Activated B cell treated with CpG ODN at 0.5 μM for 24 hours (primary cell): ENCODE measurements at regions of chr19 and their contacts with region 1.

Region 1: GRCh38 chr19:39846176-39846677 is at the start of gene FBL:
- DNase-seq: peak; percentile 98
- ATAC-seq: peak; percentile 94
- H3K4me3 Mint-ChIP-seq: peak within 1 kb of the TSS; percentile 93
- H3K27ac Mint-ChIP-seq: peak within 1 kb of the TSS; percentile 93
- H3K4me1 Mint-ChIP-seq: peaks cover 45% of the 10 kb centered on the region
- H3K27me3 Mint-ChIP-seq: no peaks in the 10 kb centered on the region
- CTCF ChIP-seq: no peak
- total RNA-seq, gene FBL: 420 and 482 TPM in 2 replicates

Region 2: DNA sequence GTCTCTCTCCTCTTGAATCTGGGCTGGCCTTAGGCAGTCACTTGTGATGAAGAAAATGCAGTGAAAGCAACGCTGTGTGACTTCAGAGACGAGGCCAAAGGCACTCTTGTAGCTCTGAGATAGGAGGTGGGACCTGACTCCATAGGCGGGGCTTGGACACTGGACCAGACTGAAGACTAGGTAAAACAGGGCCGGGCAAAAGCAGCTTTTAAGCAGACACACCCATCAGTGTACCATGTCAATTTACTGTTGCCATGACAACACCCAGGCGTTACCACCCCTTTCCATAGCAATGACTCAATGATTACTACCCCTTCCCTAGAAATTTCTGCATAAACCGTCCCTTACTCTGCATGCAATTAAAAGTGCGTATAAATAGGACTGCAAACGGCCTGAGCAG is 299.6 kb before region 1 on chr19:
- CTCF ChIA-PET with region 1: interaction called, 3 read pairs
- POLR2A ChIA-PET with region 1: interaction called, 3 read pairs
- intact Hi-C with region 1: loop called (anchors 1 kb)
- DNase-seq: no peak
- ATAC-seq: no peak
- H3K4me3 Mint-ChIP-seq: no peak overlapping the region
- H3K27ac Mint-ChIP-seq: no peak overlapping the region
- H3K4me1 Mint-ChIP-seq: peaks cover 10% of the 10 kb centered on the region
- H3K27me3 Mint-ChIP-seq: peaks cover 5% of the 10 kb centered on the region
- CTCF ChIP-seq: no peak

Region 3: DNA sequence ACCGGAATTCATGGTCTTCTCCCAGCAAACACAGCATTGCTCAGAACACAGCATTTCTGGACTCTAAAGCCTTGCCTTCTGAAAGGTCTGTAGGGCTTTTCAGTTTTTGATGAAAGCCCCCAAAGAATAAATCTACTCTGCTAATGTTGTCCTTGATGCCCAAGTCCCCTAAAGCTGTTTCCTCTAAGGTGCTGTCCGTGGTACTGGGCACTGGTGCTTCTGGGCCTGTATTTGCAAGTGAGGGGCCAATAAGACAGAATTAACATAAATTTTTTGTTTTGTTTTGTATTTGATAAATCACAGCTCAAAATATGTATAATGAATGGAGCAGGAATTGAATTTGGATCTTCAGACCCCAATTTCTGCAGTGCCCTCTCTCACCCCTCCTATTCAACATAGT is 256.0 kb before region 1 on chr19:
- CTCF ChIA-PET with region 1: no interaction called
- POLR2A ChIA-PET with region 1: no interaction called
- intact Hi-C with region 1: no loop called
- DNase-seq: no peak
- ATAC-seq: no peak
- H3K4me3 Mint-ChIP-seq: no peak overlapping the region
- H3K27ac Mint-ChIP-seq: no peak overlapping the region
- H3K4me1 Mint-ChIP-seq: no peaks in the 10 kb centered on the region
- H3K27me3 Mint-ChIP-seq: peaks cover 29% of the 10 kb centered on the region
- CTCF ChIP-seq: no peak

Region 4: GRCh38 chr19:39671738-39672363 is 174.4 kb before region 1 on chr19:
- CTCF ChIA-PET with region 1: interaction called, 3 read pairs
- POLR2A ChIA-PET with region 1: no interaction called
- intact Hi-C with region 1: loop called (anchors 5 kb)
- DNase-seq: no peak
- ATAC-seq: peak; percentile 68
- H3K4me3 Mint-ChIP-seq: no peak overlapping the region
- H3K27ac Mint-ChIP-seq: no peak overlapping the region
- H3K4me1 Mint-ChIP-seq: peaks cover 4% of the 10 kb centered on the region
- H3K27me3 Mint-ChIP-seq: peaks cover 25% of the 10 kb centered on the region
- CTCF ChIP-seq: no peak

Region 5: DNA sequence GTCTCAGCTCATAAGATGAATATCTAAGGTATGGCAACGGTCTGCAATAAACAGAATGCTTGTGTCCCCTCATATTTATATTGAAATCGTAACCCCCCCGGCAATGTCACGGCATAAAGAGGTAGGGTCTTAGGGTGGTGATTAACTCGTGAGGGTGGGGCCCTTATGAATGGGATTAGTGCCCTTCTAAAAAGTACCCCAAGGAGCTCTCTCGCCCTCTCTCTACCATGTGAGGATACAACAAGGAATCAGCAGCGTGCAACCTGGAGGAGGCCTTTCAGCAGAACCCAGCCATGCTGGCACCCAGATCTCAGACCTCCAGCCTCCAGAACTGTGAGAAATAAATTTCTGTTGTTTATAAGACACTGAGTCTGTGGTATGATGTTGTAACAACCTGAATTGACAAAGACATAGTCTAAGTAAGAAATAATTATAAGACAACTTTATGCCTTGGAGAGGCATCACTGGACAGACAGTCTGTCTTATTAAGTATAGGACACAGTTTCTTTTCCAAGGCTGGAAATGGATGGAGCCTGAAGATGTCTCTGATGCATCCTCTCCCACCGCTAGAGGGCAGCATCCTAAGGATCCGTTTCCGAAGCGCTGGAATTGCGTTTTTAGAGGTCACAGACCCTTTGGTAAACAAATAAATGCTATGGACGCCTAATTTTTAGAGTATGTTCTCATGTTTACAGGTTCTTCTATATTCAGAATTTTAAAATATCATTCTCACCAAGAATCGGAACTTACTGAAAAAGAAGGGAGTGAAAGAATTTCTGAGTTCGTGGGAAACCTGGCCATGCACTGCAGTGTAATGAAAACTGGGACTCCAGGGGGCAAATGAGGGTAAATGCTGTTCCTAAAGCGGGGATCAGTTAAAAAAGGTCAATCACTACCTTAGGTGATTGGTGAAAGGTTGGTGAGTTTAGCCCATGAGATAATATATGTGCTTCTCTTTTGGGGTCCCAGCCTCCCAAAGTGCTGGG is 80.8 kb before region 1 on chr19:
- CTCF ChIA-PET with region 1: interaction called, 7 read pairs
- POLR2A ChIA-PET with region 1: no interaction called
- intact Hi-C with region 1: loop called (anchors 2 kb)
- DNase-seq: no peak
- ATAC-seq: no peak
- H3K4me3 Mint-ChIP-seq: no peak overlapping the region
- H3K27ac Mint-ChIP-seq: no peak overlapping the region
- H3K4me1 Mint-ChIP-seq: no peaks in the 10 kb centered on the region
- H3K27me3 Mint-ChIP-seq: peaks cover 10% of the 10 kb centered on the region
- CTCF ChIP-seq: peak; percentile 37

Region 6: GRCh38 chr19:39792999-39793546 is 53.2 kb before region 1 on chr19:
- CTCF ChIA-PET with region 1: interaction called, 90 read pairs
- POLR2A ChIA-PET with region 1: interaction called, 8 read pairs
- intact Hi-C with region 1: loop called (anchors 1 kb)
- DNase-seq: peak; percentile 67
- ATAC-seq: peak; percentile 97
- H3K4me3 Mint-ChIP-seq: peak overlapping the region; percentile 78
- H3K27ac Mint-ChIP-seq: no peak overlapping the region
- H3K4me1 Mint-ChIP-seq: peaks cover 7% of the 10 kb centered on the region
- H3K27me3 Mint-ChIP-seq: peaks cover 3% of the 10 kb centered on the region
- CTCF ChIP-seq: peak; percentile 49

Region 7: GRCh38 chr19:39824143-39825092 is 21.8 kb before region 1 on chr19:
- CTCF ChIA-PET with region 1: interaction called, 5 read pairs
- POLR2A ChIA-PET with region 1: interaction called, 3 read pairs
- intact Hi-C with region 1: loop called (anchors 1 kb)
- DNase-seq: peak; percentile 67
- ATAC-seq: peak; percentile 98
- H3K4me3 Mint-ChIP-seq: no peak overlapping the region
- H3K27ac Mint-ChIP-seq: no peak overlapping the region
- H3K4me1 Mint-ChIP-seq: peaks cover 12% of the 10 kb centered on the region
- H3K27me3 Mint-ChIP-seq: no peaks in the 10 kb centered on the region
- CTCF ChIP-seq: no peak

Region 8: GRCh38 chr19:39833464-39834286 is 12.6 kb before region 1 on chr19 and contains the start of gene DYRK1B:
- CTCF ChIA-PET with region 1: interaction called, 12 read pairs
- POLR2A ChIA-PET with region 1: interaction called, 63 read pairs
- intact Hi-C with region 1: loop called (anchors 1 kb)
- DNase-seq: peak; percentile 90
- ATAC-seq: peak; percentile 86
- H3K4me3 Mint-ChIP-seq: peak within 1 kb of the TSS; percentile 82
- H3K27ac Mint-ChIP-seq: peak within 1 kb of the TSS; percentile 87
- H3K4me1 Mint-ChIP-seq: peaks cover 33% of the 10 kb centered on the region
- H3K27me3 Mint-ChIP-seq: no peaks in the 10 kb centered on the region
- CTCF ChIP-seq: no peak
- total RNA-seq, gene DYRK1B: 16.9 and 17.2 TPM in 2 replicates